ENCODE measurements at regions of chr1 and their contacts with region 1.

Region 1: GRCh38 chr1:160646711-160647328 is at the start of gene SLAMF1:
- DNase-seq: peak; percentile 85
- H3K4me3 Mint-ChIP-seq: peak within 1 kb of the TSS; percentile 96
- H3K27ac Mint-ChIP-seq: peak within 1 kb of the TSS; percentile 98
- H3K4me1 Mint-ChIP-seq: peaks cover 47% of the 10 kb centered on the region
- H3K27me3 Mint-ChIP-seq: no peaks in the 10 kb centered on the region
- total RNA-seq, gene SLAMF1: 166 TPM

Region 2: DNA sequence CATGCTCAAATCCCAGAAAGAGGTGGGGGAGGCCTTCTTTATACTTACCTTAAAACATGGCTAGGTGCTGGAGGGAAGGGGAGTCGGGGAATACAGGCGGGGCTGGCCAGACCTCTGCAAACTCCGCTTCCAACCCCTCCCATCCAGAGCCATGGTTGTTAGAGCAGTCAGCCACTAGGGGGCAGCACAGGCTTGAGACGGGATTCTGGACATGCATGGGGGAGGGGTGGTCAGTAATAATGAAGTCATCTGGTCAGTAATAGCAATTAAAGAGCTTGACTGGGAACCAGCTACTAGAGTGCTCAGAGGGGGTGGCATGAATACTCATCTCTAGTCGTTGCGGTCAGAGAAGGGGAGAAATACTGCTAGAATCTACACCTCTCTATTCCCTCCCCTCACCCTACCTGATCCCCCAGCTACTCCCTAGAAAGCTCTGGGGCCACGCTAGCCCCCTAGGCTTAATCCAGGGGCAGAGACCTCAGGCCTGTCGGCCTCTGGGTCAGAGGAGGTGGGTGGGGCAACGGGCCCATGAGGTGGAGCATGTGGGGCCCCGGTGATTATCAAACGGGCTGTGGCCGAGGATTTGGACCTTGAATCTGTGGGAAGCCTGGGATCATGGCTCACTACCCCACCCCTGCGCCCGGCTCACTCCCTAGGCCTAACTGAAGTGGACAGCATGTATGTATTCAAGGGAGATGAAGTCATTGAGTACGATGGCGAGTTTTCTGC is 453.6 kb before region 1 on chr1:
- CTCF ChIA-PET with region 1: no interaction called
- POLR2A ChIA-PET with region 1: no interaction called
- intact Hi-C with region 1: no loop called
- DNase-seq: peak; percentile 86
- H3K4me3 Mint-ChIP-seq: no peak overlapping the region
- H3K27ac Mint-ChIP-seq: no peak overlapping the region
- H3K4me1 Mint-ChIP-seq: no peaks in the 10 kb centered on the region
- H3K27me3 Mint-ChIP-seq: no peaks in the 10 kb centered on the region

Region 3: DNA sequence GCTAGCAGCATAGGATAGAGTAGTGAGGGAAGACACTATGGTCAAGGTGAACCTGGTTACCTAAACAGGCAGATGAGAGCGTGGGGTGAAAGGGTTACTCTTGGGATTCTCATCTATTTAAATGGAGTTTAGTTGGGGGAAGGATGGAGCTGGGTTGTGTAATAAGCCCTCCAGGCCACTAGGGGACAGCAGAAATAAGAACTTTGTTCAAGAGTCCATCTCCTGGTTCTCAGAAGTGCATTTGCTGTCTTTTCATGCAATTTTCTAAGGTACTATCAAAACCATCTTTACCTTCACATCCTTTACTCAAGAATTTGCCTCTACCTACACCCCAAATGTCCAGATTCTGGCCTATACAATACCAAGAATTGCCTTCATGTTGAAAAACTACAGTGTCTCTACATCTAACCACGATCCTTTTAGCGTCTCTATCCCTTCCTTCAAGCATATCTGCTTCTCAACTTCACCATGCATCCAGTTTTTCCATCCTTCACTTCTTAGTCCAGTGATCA is 28.0 kb before region 1 on chr1:
- CTCF ChIA-PET with region 1: interaction called, 34 read pairs
- POLR2A ChIA-PET with region 1: interaction called, 288 read pairs
- intact Hi-C with region 1: loop called (anchors 1 kb)
- DNase-seq: peak; percentile 59
- H3K4me3 Mint-ChIP-seq: no peak overlapping the region
- H3K27ac Mint-ChIP-seq: peak overlapping the region; percentile 68
- H3K4me1 Mint-ChIP-seq: peaks cover 63% of the 10 kb centered on the region
- H3K27me3 Mint-ChIP-seq: no peaks in the 10 kb centered on the region

Region 4: GRCh38 chr1:160664573-160665051 is 17.8 kb after region 1 on chr1:
- CTCF ChIA-PET with region 1: interaction called, 6 read pairs
- POLR2A ChIA-PET with region 1: interaction called, 7 read pairs
- intact Hi-C with region 1: loop called (anchors 1 kb)
- DNase-seq: peak; percentile 70
- H3K4me3 Mint-ChIP-seq: peak overlapping the region; percentile 40
- H3K27ac Mint-ChIP-seq: peak overlapping the region; percentile 94
- H3K4me1 Mint-ChIP-seq: peaks cover 80% of the 10 kb centered on the region
- H3K27me3 Mint-ChIP-seq: no peaks in the 10 kb centered on the region

Region 5: DNA sequence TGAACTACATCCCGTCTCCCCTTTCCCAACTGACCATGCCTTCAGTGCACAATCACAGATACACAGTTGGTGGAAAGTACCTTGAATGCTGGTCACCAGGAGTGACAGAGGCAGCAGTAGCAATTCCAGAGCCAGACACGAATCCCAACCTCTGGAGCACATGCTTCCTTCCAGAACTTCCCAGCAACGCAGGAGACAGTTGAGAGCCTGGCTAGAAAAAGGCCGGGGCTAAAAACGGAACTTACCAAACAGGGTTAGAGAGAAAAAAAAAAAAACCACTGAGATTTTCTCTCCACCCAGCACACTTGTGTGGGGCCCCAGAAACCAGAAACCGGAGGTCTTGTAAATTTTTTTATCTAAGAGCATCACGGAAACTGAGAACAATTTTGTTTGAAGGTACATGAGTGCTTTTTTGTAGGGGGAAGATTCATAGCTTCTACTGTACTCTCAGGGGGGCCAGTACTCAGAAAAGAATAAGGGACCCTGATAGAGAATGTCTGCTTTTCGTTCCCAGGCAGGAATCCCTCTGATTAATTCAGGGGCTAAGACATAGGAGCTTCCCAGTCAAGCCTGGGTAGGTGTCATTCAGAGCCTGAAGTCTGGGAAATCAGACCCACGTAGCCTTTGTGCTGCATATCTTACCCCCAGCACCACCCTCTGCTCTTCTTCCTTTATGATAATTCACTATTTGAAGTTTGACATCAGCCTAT is 64.9 kb after region 1 on chr1 and contains the start of gene CD48:
- CTCF ChIA-PET with region 1: interaction called, 4 read pairs
- POLR2A ChIA-PET with region 1: interaction called, 24 read pairs
- intact Hi-C with region 1: no loop called
- DNase-seq: peak; percentile 65
- H3K4me3 Mint-ChIP-seq: no peak within 1 kb of the TSS
- H3K27ac Mint-ChIP-seq: no peak within 1 kb of the TSS
- H3K4me1 Mint-ChIP-seq: peaks cover 17% of the 10 kb centered on the region
- H3K27me3 Mint-ChIP-seq: no peaks in the 10 kb centered on the region
- total RNA-seq, gene CD48: 190 to 194 TPM